GM13977 (cell line): ENCODE measurements at regions of chr1 and their contacts with region 1.

Region 1: DNA sequence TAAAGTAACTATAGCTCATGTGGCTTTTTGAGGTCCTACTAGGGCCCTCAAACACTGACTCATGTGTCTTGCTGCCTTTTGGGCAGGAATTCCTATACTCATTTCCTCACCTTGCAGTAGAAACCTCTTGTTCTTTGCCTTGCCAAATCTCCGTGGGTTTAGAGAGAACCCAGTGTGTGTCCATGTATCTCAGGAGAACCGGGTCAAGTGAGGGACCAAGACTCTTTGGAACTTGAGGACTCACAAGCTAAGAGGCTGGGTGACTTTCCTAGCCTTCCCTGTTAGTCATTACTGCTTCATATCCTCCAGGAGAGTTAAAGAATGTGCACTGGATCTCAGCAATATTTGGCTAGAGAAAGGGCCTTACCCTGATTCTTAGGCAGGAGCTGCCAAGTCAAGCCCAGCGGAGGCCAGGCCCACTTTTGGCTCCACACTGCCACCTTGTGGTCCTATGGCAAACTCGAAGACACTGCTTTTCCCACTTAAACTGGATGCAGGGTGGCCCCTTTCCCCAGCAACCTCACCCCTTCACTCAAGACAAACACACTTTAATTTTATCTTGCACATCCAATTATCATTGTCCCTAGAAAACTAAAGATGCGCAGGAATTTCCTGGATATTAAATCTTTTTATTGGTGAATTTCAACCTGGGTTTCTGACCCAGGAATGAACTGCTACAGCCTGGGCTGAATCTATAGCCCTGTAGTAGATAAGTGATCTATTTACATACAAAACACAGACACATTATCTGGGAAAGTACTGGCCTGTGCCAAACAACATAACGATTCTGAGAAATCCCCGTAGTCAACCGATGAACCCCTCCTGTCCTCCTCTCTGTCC is 10.6 kb downstream of the AVPR1B start:
- DNase-seq: peak; percentile 87
- CTCF ChIP-seq: peak; percentile 86

Region 2: DNA sequence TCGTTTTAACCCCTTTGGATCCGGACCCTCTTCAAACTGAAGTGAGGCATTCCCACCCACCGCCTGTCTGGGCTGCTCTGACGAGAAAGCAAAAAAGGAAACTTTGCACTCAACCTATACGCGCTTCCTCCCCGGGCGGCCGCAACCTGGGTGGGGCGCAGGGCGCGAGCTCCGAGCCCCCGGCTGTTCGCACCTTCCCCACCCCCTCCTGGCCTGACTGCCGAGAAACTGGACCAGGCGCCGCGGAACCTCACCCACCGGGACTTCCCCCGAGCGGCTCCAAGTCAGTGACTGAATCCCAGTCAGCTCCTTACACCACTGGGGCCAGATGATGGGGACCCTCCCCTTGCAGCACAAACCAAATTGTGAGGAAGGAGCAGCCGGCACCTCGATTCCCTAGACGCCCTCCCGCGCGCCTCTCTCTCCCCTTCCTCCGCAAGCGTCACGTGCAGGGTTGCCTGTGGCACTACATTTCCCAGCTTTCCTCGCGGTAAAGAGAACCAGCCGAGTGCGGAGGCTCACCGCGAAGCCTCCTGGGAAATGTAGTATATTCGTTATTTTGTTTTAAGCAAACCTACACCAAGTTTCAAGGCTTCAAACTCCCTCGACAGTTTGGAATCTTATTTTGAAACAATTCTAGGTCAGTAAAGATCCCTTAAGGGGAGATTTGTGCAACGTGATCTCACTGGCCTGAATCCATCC is 331.4 kb before region 1 on chr1 and contains the start of gene RAB29:
- in situ Hi-C with region 1: loop called (anchors 25 kb)
- DNase-seq: peak; percentile 80
- CTCF ChIP-seq: no peak

Region 3: GRCh38 chr1:206029484-206029883 is 77.1 kb before region 1 on chr1:
- in situ Hi-C with region 1: loop called (anchors 5 kb)
- DNase-seq: no peak
- CTCF ChIP-seq: no peak